Breast epithelium (tissue), 4 donors: ENCODE measurements at regions of chr19 and their contacts with region 1.

Region 1: DNA sequence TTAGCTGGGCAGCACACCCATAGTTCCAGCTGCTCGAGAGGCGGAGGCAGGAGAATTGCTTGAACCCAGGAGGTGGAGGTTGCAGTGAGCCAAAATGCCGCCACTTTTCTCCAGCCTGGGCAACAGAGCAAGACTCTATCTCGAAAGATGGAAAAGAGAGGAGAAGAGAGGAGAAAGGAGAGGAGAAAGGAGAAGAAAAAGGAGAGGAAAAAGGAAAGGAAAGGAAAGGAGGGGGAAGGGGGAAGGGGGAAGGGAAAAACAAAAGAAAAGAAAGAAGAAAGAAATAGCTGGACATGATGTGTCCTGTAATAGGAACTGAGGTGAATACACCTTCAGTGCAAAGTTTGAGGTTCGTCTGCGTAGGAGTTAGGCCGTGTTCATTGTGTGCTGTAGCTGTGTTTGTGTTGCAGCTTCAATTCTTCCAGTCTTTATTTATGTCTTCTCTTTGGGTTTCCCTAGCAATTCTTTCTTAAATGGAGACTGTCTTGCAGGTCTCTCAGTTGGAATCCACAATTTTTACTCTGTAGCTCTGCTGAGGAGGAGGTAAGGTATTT is 13.4 kb downstream of the ZNF607 start:
- DNase-seq: no peak
- H3K4me3 ChIP-seq: no peak overlapping the region
- H3K27ac ChIP-seq: no peak overlapping the region
- H3K4me1 ChIP-seq: no peaks in the 10 kb centered on the region
- H3K27me3 ChIP-seq: no peaks in the 10 kb centered on the region
- CTCF ChIP-seq: no peak
- POLR2A ChIP-seq: no peak

Region 2: GRCh38 chr19:36707134-36707533 is 999.0 kb before region 1 on chr19:
- intact Hi-C with region 1: loop called (anchors 5 kb)
- DNase-seq: no peak
- H3K4me3 ChIP-seq: no peak overlapping the region
- H3K27ac ChIP-seq: no peak overlapping the region
- H3K4me1 ChIP-seq: no peaks in the 10 kb centered on the region
- H3K27me3 ChIP-seq: no peaks in the 10 kb centered on the region
- CTCF ChIP-seq: no peak
- POLR2A ChIP-seq: no peak

Region 3: GRCh38 chr19:38173291-38174041 is 467.3 kb after region 1 on chr19:
- intact Hi-C with region 1: loop called (anchors 10 kb)
- DNase-seq: peak in 1 of 2 donors; percentile 18
- H3K4me3 ChIP-seq: no peak overlapping the region
- H3K27ac ChIP-seq: no peak overlapping the region
- H3K4me1 ChIP-seq: no peaks in the 10 kb centered on the region
- H3K27me3 ChIP-seq: no peaks in the 10 kb centered on the region
- CTCF ChIP-seq: no peak
- POLR2A ChIP-seq: no peak